GM10248 (cell line): ENCODE measurements at regions of chr17 and their contacts with region 1.

Region 1: GRCh38 chr17:8490256-8491023 is 54.8 kb downstream of the NDEL1 start:
- DNase-seq: no peak
- CTCF ChIP-seq: no peak

Region 2: GRCh38 chr17:8479431-8479947 is 11.0 kb before region 1 on chr17:
- CTCF ChIA-PET with region 1: interaction called, 10 read pairs
- POLR2A ChIA-PET with region 1: no interaction called
- DNase-seq: no peak
- CTCF ChIP-seq: no peak